ENCODE measurements at regions of chr3 and their contacts with region 1.

Region 1: GRCh38 chr3:169149349-169149890 is 514.1 kb downstream of the MECOM start:
- DNase-seq: peak; percentile 93
- H3K4me3 ChIP-seq: peak overlapping the region in 2 of 3 experiments; percentile 30 to 60
- H3K27ac ChIP-seq: peak overlapping the region; percentile 82
- H3K4me1 ChIP-seq: peaks cover 47% of the 10 kb centered on the region
- H3K27me3 ChIP-seq: no peaks in the 10 kb centered on the region
- CTCF ChIP-seq: peak; percentile 88 to 89
- POLR2A ChIP-seq: peak; percentile 71

Region 2: GRCh38 chr3:168620826-168621225 is 528.6 kb before region 1 on chr3:
- CTCF ChIA-PET with region 1: no interaction called
- POLR2A ChIA-PET with region 1: no interaction called
- dilution Hi-C with region 1: no loop called
- intact Hi-C with region 1: no loop called
- DNase-seq: peak; percentile 13
- H3K4me3 ChIP-seq: no peak overlapping the region
- H3K27ac ChIP-seq: no peak overlapping the region
- H3K4me1 ChIP-seq: no peaks in the 10 kb centered on the region
- H3K27me3 ChIP-seq: peaks cover 2 to 16% of the 10 kb centered on the region in 2 experiments
- CTCF ChIP-seq: peak; percentile 36 to 43
- POLR2A ChIP-seq: no peak

Region 3: GRCh38 chr3:168952551-168952950 is 196.9 kb before region 1 on chr3:
- CTCF ChIA-PET with region 1: interaction called, 16 read pairs
- POLR2A ChIA-PET with region 1: no interaction called
- dilution Hi-C with region 1: no loop called
- intact Hi-C with region 1: loop called (anchors 2 kb)
- DNase-seq: peak; percentile 62
- H3K4me3 ChIP-seq: no peak overlapping the region
- H3K27ac ChIP-seq: no peak overlapping the region
- H3K4me1 ChIP-seq: no peaks in the 10 kb centered on the region
- H3K27me3 ChIP-seq: no peaks in the 10 kb centered on the region
- CTCF ChIP-seq: no peak
- POLR2A ChIP-seq: no peak

Region 4: DNA sequence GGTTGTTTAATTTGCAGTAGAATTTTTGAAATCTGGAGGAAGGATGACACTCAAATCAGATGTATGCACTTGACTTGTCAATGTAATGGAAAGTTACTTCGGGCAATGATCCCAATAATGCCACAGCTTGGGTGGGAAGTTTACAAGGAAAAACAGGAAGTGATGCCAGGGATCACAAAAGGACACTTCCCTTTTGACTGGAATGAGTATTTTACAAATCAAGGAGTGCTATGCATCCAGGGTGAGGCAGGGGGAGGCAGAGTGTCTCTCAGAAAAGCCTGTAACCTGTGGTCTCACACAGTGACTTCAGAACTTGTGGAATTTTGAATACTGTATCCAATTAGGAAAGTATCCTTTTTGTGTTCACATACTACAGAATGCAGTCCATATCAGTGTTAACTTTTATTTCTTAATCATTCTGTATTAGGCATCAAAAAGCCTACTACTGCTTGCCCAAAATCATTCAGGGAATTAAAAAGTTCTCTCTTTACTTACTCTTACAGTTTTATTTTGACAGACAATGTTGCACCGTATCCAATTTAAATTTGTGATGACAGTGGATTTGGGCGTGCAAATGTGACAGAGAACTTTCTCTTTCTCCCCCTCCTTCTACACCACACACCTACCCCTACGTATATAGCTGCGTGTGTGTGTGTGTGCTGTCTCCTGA is 69.0 kb after region 1 on chr3:
- CTCF ChIA-PET with region 1: interaction called, 35 read pairs
- POLR2A ChIA-PET with region 1: no interaction called
- dilution Hi-C with region 1: no loop called
- intact Hi-C with region 1: loop called (anchors 1 kb)
- DNase-seq: peak; percentile 98
- H3K4me3 ChIP-seq: no peak overlapping the region
- H3K27ac ChIP-seq: peak overlapping the region; percentile 66
- H3K4me1 ChIP-seq: peaks cover 23% of the 10 kb centered on the region
- H3K27me3 ChIP-seq: no peaks in the 10 kb centered on the region
- CTCF ChIP-seq: peak; percentile 74 to 89
- POLR2A ChIP-seq: no peak

Region 5: DNA sequence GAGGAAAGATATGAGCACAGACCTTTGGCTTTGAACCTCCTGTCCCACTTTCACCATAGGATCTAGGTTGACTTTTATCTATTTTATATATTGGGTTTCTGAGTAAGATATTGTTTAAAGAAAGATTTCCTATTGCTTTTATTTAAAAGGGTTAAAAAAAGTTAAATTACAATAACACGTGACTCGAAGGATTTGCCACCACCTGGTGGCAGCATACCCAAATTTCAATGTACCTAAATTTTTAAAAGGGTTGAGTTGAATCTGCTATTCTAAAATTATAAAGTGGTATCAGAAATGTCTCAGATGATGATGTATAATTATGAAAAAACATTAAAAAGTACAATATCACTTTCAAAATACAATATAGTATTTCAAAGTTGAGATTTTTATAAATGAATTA is 145.7 kb after region 1 on chr3:
- CTCF ChIA-PET with region 1: interaction called, 17 read pairs
- POLR2A ChIA-PET with region 1: interaction called, 3 read pairs
- dilution Hi-C with region 1: no loop called
- intact Hi-C with region 1: loop called (anchors 1 kb)
- DNase-seq: peak; percentile 71
- H3K4me3 ChIP-seq: no peak overlapping the region
- H3K27ac ChIP-seq: no peak overlapping the region
- H3K4me1 ChIP-seq: peaks cover 7% of the 10 kb centered on the region
- H3K27me3 ChIP-seq: no peaks in the 10 kb centered on the region
- CTCF ChIP-seq: peak; percentile 29 to 32
- POLR2A ChIP-seq: no peak

Region 6: GRCh38 chr3:169454823-169455222 is 305.4 kb after region 1 on chr3:
- CTCF ChIA-PET with region 1: no interaction called
- POLR2A ChIA-PET with region 1: no interaction called
- dilution Hi-C with region 1: no loop called
- intact Hi-C with region 1: loop called (anchors 1 kb)
- DNase-seq: peak; percentile 93
- H3K4me3 ChIP-seq: no peak overlapping the region
- H3K27ac ChIP-seq: peak overlapping the region; percentile 69
- H3K4me1 ChIP-seq: peaks cover 28% of the 10 kb centered on the region
- H3K27me3 ChIP-seq: no peaks in the 10 kb centered on the region
- CTCF ChIP-seq: no peak
- POLR2A ChIP-seq: no peak

Region 7: DNA sequence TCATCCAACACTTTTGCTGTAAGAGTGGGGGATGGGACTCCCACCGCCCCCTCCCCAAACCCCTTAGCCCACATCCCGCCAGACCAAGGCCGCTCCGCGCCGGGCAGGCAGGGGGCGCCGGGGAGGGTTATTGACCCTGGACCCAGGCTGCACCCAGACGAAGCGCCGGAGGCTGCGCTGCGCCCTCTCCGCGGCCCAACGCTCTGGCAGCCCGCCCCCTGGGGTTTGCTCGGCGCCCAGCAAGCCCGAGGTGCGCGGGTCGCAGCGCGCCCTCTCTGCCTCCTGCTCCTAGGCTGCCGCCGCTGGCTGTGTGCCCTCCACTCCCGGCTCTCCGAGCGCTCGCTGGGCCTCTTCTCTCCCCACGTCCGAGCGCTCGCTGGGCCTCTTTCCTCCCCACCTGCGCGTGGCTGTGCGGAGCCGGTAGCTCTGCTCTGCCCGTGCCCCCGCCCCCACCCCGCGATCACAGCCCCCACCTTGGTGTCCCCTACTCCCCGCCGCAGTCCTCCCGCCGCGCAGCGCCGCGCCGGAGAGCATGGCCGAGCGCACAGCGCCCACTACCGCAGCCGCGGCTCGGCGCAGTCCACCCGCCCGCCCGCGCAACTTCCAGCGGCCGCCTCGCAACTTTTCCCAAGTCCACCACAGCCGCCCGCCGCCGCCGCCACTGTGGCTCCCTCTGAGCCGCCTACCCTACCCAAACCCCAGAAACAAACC is 512.9 kb after region 1 on chr3:
- CTCF ChIA-PET with region 1: interaction called, 206 read pairs
- POLR2A ChIA-PET with region 1: interaction called, 5 read pairs
- dilution Hi-C with region 1: no loop called
- intact Hi-C with region 1: loop called (anchors 1 kb)
- DNase-seq: peak; percentile 84
- H3K4me3 ChIP-seq: peak overlapping the region; percentile 23 to 77 (median 64)
- H3K27ac ChIP-seq: peak overlapping the region; percentile 81
- H3K4me1 ChIP-seq: peaks cover 66% of the 10 kb centered on the region
- H3K27me3 ChIP-seq: no peaks in the 10 kb centered on the region
- CTCF ChIP-seq: peak; percentile 46 to 77
- POLR2A ChIP-seq: peak; percentile 55

Measured in endothelial cell of umbilical vein (primary cell).